Activated CD4-positive, alpha-beta memory T cell treated with anti-CD3 and anti-CD28 coated beads for 36 hours (primary cell): ENCODE measurements at regions of chr17 and their contacts with region 1.

Region 1: GRCh38 chr17:62724398-62725146 is 83.5 kb downstream of the MARCHF10 start:
- DNase-seq: peak; percentile 92
- H3K4me3 Mint-ChIP-seq: peak overlapping the region; percentile 24
- H3K27ac Mint-ChIP-seq: peak overlapping the region; percentile 8
- H3K4me1 Mint-ChIP-seq: peaks cover 21% of the 10 kb centered on the region
- H3K27me3 Mint-ChIP-seq: peaks cover 52% of the 10 kb centered on the region

Region 2: GRCh38 chr17:62739645-62740388 is 15.2 kb after region 1 on chr17:
- CTCF ChIA-PET with region 1: interaction called, 3 read pairs
- POLR2A ChIA-PET with region 1: interaction called, 12 read pairs
- intact Hi-C with region 1: loop called (anchors 1 kb)
- DNase-seq: no peak
- H3K4me3 Mint-ChIP-seq: no peak overlapping the region
- H3K27ac Mint-ChIP-seq: no peak overlapping the region
- H3K4me1 Mint-ChIP-seq: peaks cover 21% of the 10 kb centered on the region
- H3K27me3 Mint-ChIP-seq: peaks cover 32% of the 10 kb centered on the region

Region 3: GRCh38 chr17:63275318-63275970 is 550.9 kb after region 1 on chr17:
- CTCF ChIA-PET with region 1: no interaction called
- POLR2A ChIA-PET with region 1: no interaction called
- intact Hi-C with region 1: loop called (anchors 5 kb)
- DNase-seq: peak; percentile 29
- H3K4me3 Mint-ChIP-seq: no peak overlapping the region
- H3K27ac Mint-ChIP-seq: no peak overlapping the region
- H3K4me1 Mint-ChIP-seq: peaks cover 28% of the 10 kb centered on the region
- H3K27me3 Mint-ChIP-seq: no peaks in the 10 kb centered on the region